Caco-2 (cell line): ENCODE measurements at regions of chr6 and their contacts with region 1.

Region 1: GRCh38 chr6:112043032-112044007 is 10.6 kb upstream of the CCN6 start:
- DNase-seq: peak; percentile 89
- H3K4me3 ChIP-seq: peak overlapping the region; percentile 59
- H3K4me3 Mint-ChIP-seq: peak overlapping the region; percentile 83
- H3K27ac Mint-ChIP-seq: peak overlapping the region; percentile 73
- H3K4me1 ChIP-seq: peaks cover 3% of the 10 kb centered on the region; the same call in 1 of the 2 replicates
- H3K4me1 Mint-ChIP-seq: no peaks in the 10 kb centered on the region
- H3K27me3 ChIP-seq: no peaks in the 10 kb centered on the region
- H3K27me3 Mint-ChIP-seq: peaks cover 3% of the 10 kb centered on the region
- CTCF ChIP-seq: peak; percentile 89 to 96

Region 2: DNA sequence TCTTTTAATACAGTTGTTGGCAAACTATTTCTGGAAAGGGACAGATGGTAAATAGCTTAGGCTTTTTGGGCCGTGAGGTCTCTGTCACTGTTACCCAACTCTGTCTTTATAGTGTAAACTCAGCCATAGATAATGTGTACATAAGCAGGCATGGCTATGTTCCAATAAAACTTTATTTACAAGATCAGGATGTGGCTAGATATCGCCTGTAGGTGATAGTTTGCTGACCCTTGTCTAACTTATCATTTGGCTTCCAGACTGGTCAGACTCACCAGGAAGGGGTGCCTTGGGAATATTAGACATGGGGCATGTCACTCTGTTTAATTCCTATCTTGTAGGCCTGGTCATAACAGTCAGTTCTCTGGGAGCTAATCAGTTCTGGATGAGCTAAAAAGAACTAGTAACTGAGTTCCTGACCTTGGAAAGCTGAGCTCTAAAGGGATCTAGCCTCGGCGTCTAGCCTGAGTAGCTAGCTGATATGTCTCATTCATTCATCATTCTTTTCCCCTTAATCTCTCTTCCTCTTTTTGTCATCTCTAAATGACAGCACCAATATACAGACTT is 792.4 kb before region 1 on chr6:
- CTCF ChIA-PET with region 1: no interaction called
- POLR2A ChIA-PET with region 1: no interaction called
- intact Hi-C with region 1: no loop called
- DNase-seq: no peak
- H3K4me3 ChIP-seq: no peak overlapping the region
- H3K4me3 Mint-ChIP-seq: no peak overlapping the region
- H3K27ac Mint-ChIP-seq: no peak overlapping the region
- H3K4me1 ChIP-seq: peaks cover 4% of the 10 kb centered on the region; the same call in 1 of the 2 replicates
- H3K4me1 Mint-ChIP-seq: peaks cover 4% of the 10 kb centered on the region
- H3K27me3 ChIP-seq: no peaks in the 10 kb centered on the region
- H3K27me3 Mint-ChIP-seq: no peaks in the 10 kb centered on the region
- CTCF ChIP-seq: no peak

Region 3: GRCh38 chr6:111709615-111710398 is 333.5 kb before region 1 on chr6:
- CTCF ChIA-PET with region 1: interaction called, 30 read pairs
- POLR2A ChIA-PET with region 1: no interaction called
- intact Hi-C with region 1: loop called (anchors 1 kb)
- DNase-seq: peak in 1 of 2 experiments; percentile 57
- H3K4me3 ChIP-seq: no peak overlapping the region
- H3K4me3 Mint-ChIP-seq: no peak overlapping the region
- H3K27ac Mint-ChIP-seq: no peak overlapping the region
- H3K4me1 ChIP-seq: no peaks in the 10 kb centered on the region
- H3K4me1 Mint-ChIP-seq: no peaks in the 10 kb centered on the region
- H3K27me3 ChIP-seq: no peaks in the 10 kb centered on the region
- H3K27me3 Mint-ChIP-seq: no peaks in the 10 kb centered on the region
- CTCF ChIP-seq: peak; percentile 42 to 57

Region 4: GRCh38 chr6:111873178-111874024 is 169.9 kb before region 1 on chr6 and contains the start of gene FYN:
- CTCF ChIA-PET with region 1: no interaction called
- POLR2A ChIA-PET with region 1: no interaction called
- intact Hi-C with region 1: loop called (anchors 1 kb)
- DNase-seq: peak; percentile 94 to 98
- H3K4me3 ChIP-seq: peak within 1 kb of the TSS; percentile 38
- H3K4me3 Mint-ChIP-seq: peak within 1 kb of the TSS; percentile 85
- H3K27ac Mint-ChIP-seq: no peak within 1 kb of the TSS
- H3K4me1 ChIP-seq: peaks cover 8% of the 10 kb centered on the region
- H3K4me1 Mint-ChIP-seq: no peaks in the 10 kb centered on the region
- H3K27me3 ChIP-seq: no peaks in the 10 kb centered on the region; the same call in 1 of the 2 replicates
- H3K27me3 Mint-ChIP-seq: peaks cover 12% of the 10 kb centered on the region
- CTCF ChIP-seq: peak in 1 of 2 experiments; percentile 31
- total RNA-seq, gene FYN: 7.2 and 7.6 TPM in 2 replicates

Region 5: GRCh38 chr6:111952821-111953540 is 90.3 kb before region 1 on chr6:
- CTCF ChIA-PET with region 1: no interaction called
- POLR2A ChIA-PET with region 1: no interaction called
- intact Hi-C with region 1: no loop called
- DNase-seq: no peak
- H3K4me3 ChIP-seq: no peak overlapping the region
- H3K4me3 Mint-ChIP-seq: no peak overlapping the region
- H3K27ac Mint-ChIP-seq: no peak overlapping the region
- H3K4me1 ChIP-seq: no peaks in the 10 kb centered on the region
- H3K4me1 Mint-ChIP-seq: no peaks in the 10 kb centered on the region
- H3K27me3 ChIP-seq: no peaks in the 10 kb centered on the region; the same call in 1 of the 2 replicates
- H3K27me3 Mint-ChIP-seq: peaks cover 13% of the 10 kb centered on the region
- CTCF ChIP-seq: no peak

Region 6: DNA sequence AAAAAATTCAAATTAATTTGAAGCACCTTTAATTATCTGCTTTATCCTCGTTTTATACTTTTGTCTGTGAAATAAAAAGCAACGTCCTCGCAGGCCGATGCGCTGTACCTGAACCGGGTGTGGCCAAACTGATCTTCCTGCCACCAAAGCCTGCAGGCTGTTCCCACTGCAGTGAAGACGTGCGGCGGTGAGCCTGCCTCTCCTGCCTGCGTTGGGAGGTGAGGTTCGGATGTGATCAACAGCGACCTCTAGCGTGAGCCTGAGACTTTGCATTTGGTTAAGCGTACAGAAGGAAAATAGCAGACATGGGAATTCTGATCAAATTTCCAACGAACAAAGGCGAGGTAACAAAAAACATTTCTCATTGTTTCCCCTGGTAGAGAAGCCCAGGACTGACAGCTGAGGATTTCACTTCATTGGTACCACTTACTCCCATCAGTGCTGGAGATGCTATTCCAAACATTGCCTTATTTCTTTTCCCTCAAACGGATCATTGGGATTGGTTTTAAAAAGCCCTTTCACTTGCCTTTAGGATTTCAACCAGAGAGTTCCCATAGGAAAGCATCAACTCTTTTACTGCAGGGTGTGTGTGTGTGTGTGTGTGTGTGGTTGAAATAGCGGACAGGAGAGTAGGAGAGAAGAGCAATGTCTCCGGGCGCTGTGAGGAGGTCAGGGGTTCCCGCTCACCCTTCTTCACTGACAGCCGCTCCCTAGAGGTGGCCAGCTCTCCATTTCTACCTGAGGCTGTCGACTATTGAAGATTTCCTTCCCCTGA is 46.1 kb before region 1 on chr6:
- CTCF ChIA-PET with region 1: no interaction called
- POLR2A ChIA-PET with region 1: no interaction called
- intact Hi-C with region 1: loop called (anchors 1 kb)
- DNase-seq: peak; percentile 80
- H3K4me3 ChIP-seq: no peak overlapping the region
- H3K4me3 Mint-ChIP-seq: no peak overlapping the region
- H3K27ac Mint-ChIP-seq: no peak overlapping the region
- H3K4me1 ChIP-seq: no peaks in the 10 kb centered on the region
- H3K4me1 Mint-ChIP-seq: no peaks in the 10 kb centered on the region
- H3K27me3 ChIP-seq: no peaks in the 10 kb centered on the region
- H3K27me3 Mint-ChIP-seq: peaks cover 4% of the 10 kb centered on the region
- CTCF ChIP-seq: peak; percentile 77 to 80

Region 7: DNA sequence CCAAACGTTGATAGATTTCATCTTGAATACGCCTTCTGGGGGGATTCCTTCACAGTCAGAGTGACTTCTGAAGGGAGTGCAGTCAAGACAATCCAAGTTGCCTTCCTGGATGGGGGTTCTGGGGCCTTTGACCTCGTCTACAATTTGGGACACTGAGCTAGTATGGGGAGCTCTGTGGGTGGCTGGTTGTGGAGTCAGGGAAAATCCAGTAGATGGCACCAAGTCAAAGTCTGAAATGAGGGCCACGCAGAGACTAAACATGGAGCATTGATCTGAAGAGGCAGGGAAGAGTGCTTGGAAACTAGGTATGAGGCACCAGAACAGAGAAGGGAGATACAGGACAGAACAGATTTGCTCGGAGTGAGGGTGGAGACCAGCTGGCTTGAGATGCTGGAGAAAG is 33.0 kb before region 1 on chr6:
- CTCF ChIA-PET with region 1: interaction called, 9 read pairs
- POLR2A ChIA-PET with region 1: no interaction called
- intact Hi-C with region 1: loop called (anchors 1 kb)
- DNase-seq: no peak
- H3K4me3 ChIP-seq: no peak overlapping the region
- H3K4me3 Mint-ChIP-seq: no peak overlapping the region
- H3K27ac Mint-ChIP-seq: no peak overlapping the region
- H3K4me1 ChIP-seq: no peaks in the 10 kb centered on the region
- H3K4me1 Mint-ChIP-seq: peaks cover 6% of the 10 kb centered on the region
- H3K27me3 ChIP-seq: no peaks in the 10 kb centered on the region
- H3K27me3 Mint-ChIP-seq: peaks cover 3% of the 10 kb centered on the region
- CTCF ChIP-seq: peak in 1 of 2 experiments; percentile 33

Region 8: DNA sequence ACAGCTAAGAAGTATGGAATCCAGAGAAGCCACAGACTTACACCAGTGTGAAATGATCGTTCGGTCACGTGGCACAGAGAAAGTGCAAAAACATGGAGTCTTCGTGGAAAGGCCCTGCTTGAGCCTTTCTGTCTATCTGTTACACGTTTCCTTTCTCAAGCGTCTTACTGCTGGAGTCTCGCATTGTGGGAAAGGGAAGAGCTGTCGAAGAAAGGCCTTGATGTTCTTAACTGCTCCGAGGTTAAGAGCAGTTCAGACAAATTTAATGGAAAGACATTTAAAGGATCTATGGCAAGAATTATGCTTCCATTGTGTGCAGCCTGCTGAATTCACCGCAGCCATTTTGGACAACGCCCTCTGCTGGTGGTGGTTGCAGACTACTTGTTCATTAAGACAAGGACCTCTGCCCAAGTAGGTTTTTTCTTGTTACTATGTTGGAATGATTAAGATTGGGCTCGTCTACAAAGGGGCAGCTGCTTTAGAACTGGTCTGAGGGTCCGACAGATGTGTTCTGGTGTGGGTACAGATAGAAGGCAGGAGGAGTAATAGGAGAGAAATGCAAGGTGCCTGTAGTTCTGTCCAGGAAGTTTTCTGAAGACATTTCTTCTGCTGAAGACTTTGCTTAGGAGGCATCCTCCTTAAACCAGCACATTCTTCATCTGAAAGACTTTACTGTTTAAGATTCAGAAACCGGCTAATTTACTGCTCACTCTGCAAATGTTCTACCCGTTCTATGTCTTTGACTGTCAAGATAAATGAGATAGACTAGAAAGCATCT is 14.1 kb before region 1 on chr6:
- CTCF ChIA-PET with region 1: interaction called, 10 read pairs
- POLR2A ChIA-PET with region 1: no interaction called
- intact Hi-C with region 1: no loop called
- DNase-seq: peak; percentile 59 to 68
- H3K4me3 ChIP-seq: no peak overlapping the region
- H3K4me3 Mint-ChIP-seq: no peak overlapping the region
- H3K27ac Mint-ChIP-seq: no peak overlapping the region
- H3K4me1 ChIP-seq: no peaks in the 10 kb centered on the region
- H3K4me1 Mint-ChIP-seq: no peaks in the 10 kb centered on the region
- H3K27me3 ChIP-seq: no peaks in the 10 kb centered on the region
- H3K27me3 Mint-ChIP-seq: peaks cover 4% of the 10 kb centered on the region
- CTCF ChIP-seq: peak; percentile 65 to 68

Region 9: GRCh38 chr6:112087136-112087911 is 44.0 kb after region 1 on chr6 and contains the starts of genes FAM229B and TUBE1:
- CTCF ChIA-PET with region 1: interaction called, 10 read pairs
- POLR2A ChIA-PET with region 1: no interaction called
- intact Hi-C with region 1: no loop called
- DNase-seq: peak; percentile 88 to 93
- H3K4me3 ChIP-seq: peak within 1 kb of the TSS; percentile 77
- H3K4me3 Mint-ChIP-seq: no peak within 1 kb of the TSS
- H3K27ac Mint-ChIP-seq: no peak within 1 kb of the TSS
- H3K4me1 ChIP-seq: peaks cover 3% of the 10 kb centered on the region; the same call in 1 of the 2 replicates
- H3K4me1 Mint-ChIP-seq: peaks cover 6% of the 10 kb centered on the region
- H3K27me3 ChIP-seq: no peaks in the 10 kb centered on the region; the same call in 1 of the 2 replicates
- H3K27me3 Mint-ChIP-seq: peaks cover 10% of the 10 kb centered on the region
- CTCF ChIP-seq: peak in 1 of 2 experiments; percentile 21
- total RNA-seq, gene FAM229B: 1.9 and 2.0 TPM in 2 replicates
- total RNA-seq, gene TUBE1: 26.3 and 30.8 TPM in 2 replicates